WTC11 (cell line): ENCODE measurements at regions of chr9 and their contacts with region 1.

Region 1: DNA sequence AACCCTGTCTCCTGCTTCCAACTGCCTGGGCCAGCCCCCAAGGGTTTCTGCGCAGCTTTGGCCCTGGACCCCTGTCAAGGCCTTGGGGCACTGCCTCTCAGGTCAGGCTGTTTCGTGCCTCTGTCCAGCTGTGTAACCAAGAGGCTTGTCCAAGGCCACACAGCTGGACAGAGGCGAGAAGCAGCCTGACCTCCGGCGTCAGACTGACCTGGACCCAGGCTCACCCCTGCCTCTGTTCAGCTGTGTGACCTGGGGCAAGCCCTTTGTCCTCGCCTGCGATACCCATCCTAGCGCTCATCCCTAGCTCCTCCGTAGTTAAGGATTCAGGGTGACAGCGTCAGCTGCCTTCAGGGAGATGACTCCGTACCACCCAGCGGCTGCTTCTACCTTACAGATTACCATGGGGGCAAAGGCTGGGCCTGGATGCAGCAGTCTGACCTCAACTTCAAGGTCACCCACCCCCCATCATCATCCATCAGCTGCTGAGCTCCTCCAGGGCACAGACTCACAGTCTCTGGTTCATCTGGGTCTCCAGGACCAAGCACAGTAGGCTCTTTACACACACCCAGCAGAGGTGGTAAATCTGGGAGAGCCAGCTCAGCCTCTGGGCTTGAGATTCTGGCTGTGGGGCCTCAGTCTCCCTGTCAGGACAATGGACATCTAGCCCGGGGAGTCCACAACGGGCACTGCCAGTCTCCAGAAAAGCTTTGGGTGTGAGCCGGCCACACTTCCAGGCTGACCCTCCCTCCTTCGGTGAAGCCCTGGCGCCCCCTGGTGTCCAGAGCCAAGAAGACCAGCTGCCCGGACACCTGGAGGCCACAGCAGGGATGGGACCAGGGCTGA is 7.9 kb downstream of the AK1 start:
- DNase-seq: peak; percentile 96
- ATAC-seq: peak; percentile 89
- H3K4me3 Mint-ChIP-seq: no peak overlapping the region
- H3K27ac Mint-ChIP-seq: no peak overlapping the region; the same call in 1 of the 2 replicates
- H3K4me1 Mint-ChIP-seq: peaks cover 10% of the 10 kb centered on the region
- H3K27me3 Mint-ChIP-seq: no peaks in the 10 kb centered on the region
- CTCF ChIP-seq: peak; percentile 92

Region 2: DNA sequence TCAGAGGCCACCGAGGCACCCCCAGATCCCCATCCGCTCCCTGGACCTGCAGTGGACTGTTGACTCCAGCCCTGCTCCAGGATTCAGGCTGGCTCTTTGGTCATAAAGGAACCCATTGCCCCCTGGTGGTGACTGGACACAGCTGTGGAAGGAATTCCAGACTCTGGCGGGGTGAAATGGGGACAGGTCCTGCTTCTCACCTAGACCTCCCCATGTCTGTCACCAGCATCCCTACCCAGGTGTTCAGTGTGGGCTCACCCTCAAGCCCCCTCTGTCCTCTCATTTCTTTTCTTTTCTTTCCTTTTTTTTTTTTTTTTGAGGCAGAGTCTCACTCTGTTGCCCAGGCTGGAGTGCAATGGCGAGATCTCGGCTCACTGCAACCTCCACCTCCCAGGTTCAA is 283.0 kb before region 1 on chr9:
- CTCF ChIA-PET with region 1: interaction called, 12 read pairs
- POLR2A ChIA-PET with region 1: no interaction called
- DNase-seq: peak; percentile 86
- ATAC-seq: peak; percentile 92
- H3K4me3 Mint-ChIP-seq: no peak overlapping the region
- H3K27ac Mint-ChIP-seq: no peak overlapping the region
- H3K4me1 Mint-ChIP-seq: peaks cover 15% of the 10 kb centered on the region
- H3K27me3 Mint-ChIP-seq: no peaks in the 10 kb centered on the region
- CTCF ChIP-seq: peak; percentile 72

Region 3: DNA sequence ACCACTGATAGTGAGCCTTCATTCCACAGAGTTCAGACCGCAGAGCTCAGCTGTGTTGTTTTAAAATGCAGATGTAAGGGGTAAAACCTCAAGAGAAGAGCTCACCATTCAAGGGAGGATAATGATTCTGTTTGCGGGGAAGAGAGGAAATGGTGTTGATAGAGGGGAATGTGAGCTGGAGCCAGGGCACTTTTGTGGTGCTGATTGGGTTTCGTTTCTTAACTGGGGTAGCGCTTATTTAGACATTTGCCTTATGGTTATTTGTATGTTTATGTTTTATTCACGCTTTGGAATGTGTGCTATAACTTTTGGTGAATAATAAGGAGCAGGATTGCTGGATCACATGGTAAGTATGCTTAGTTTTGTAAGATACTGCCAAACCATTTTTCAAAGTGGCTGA is 214.9 kb before region 1 on chr9:
- CTCF ChIA-PET with region 1: no interaction called
- POLR2A ChIA-PET with region 1: no interaction called
- DNase-seq: no peak
- ATAC-seq: peak; percentile 79
- H3K4me3 Mint-ChIP-seq: peak overlapping the region; percentile 4
- H3K27ac Mint-ChIP-seq: peak overlapping the region; percentile 97
- H3K4me1 Mint-ChIP-seq: peaks cover 45% of the 10 kb centered on the region
- H3K27me3 Mint-ChIP-seq: no peaks in the 10 kb centered on the region
- CTCF ChIP-seq: no peak

Region 4: DNA sequence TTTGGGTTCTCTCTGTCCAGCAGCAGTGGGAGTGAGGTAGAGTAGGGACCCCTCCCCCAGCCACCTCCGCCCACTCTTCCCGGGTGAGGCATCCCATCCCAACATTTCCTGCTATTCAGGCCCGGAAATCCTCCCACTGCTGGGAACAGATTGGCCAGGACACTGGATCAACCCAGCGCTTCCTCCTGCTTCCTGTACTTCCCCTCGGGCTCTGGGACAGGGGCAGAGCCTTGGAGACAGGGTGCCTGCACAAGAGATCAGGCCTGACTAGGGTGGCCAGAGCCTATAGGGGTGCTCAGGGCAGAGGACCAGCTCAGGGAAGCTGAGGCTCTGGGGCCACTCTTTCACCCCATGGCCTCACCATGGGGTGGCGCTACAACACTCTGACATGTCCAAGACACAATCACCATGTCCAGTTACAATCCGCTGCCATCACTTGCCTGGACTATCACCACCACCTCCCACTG is 105.6 kb before region 1 on chr9:
- CTCF ChIA-PET with region 1: interaction called, 30 read pairs
- POLR2A ChIA-PET with region 1: no interaction called
- DNase-seq: peak; percentile 78
- ATAC-seq: peak; percentile 78
- H3K4me3 Mint-ChIP-seq: no peak overlapping the region
- H3K27ac Mint-ChIP-seq: peak overlapping the region; percentile 8; the same call in 1 of the 2 replicates
- H3K4me1 Mint-ChIP-seq: peaks cover 44% of the 10 kb centered on the region
- H3K27me3 Mint-ChIP-seq: peaks cover 4% of the 10 kb centered on the region; the same call in 1 of the 2 replicates
- CTCF ChIP-seq: 0 out of 2 replicates have a peak, but pooled peaks have one; percentile 37

Region 5: DNA sequence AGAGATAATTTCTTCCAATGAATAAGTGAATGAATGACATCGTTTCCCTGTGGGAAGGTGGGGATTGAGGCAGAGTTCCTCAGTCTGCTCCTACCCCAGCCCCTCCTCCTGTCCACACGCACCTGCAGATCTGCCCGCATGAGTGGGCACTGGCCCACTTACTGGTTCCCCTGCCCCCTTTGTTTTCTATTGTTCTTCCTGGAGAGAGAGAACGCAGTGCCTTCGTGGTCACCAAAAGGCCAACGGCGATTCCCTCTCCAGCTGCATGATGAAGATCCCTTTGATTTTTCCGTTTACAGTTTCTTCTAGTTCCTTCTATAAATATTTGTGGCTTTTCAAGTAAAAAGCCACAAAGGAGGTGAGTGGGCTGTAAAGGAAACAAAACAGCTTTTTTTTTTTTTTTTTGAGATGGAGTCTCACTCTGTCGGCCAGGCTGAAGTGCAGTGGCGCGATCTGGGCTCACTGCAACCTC is 72.6 kb before region 1 on chr9:
- CTCF ChIA-PET with region 1: interaction called, 17 read pairs
- POLR2A ChIA-PET with region 1: interaction called, 9 read pairs
- DNase-seq: no peak
- ATAC-seq: no peak
- H3K4me3 Mint-ChIP-seq: no peak overlapping the region
- H3K27ac Mint-ChIP-seq: no peak overlapping the region
- H3K4me1 Mint-ChIP-seq: peaks cover 8% of the 10 kb centered on the region
- H3K27me3 Mint-ChIP-seq: no peaks in the 10 kb centered on the region
- CTCF ChIP-seq: no peak

Region 6: DNA sequence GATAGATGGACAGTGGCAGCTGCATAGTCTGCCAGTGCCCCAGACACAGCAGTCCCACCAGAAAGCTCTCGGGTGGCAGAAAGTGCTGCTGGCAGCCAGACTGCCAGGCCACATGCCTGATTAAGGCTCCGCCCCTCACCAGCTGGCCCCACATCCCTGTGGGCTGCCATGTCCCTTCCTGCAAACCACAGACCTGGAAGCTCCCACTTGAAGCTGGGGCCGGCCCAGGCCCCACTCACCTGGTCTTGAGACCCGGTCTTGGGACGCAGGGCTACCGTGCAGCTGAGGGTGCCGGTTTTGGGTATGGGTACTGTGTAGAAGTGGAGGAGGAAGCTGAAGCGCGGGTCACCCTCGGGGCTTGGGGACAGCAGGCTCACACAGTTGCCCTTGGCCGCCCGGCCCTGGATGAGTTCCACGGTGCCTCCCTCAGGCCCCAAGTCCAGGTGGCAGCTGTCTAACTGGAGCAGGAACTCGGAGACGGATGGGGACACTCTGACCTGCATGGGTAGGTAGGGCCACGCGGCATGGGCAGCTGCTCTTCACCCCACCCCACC is 51.6 kb before region 1 on chr9:
- CTCF ChIA-PET with region 1: interaction called, 115 read pairs
- POLR2A ChIA-PET with region 1: no interaction called
- DNase-seq: no peak
- ATAC-seq: no peak
- H3K4me3 Mint-ChIP-seq: no peak overlapping the region
- H3K27ac Mint-ChIP-seq: 0 out of 2 replicates have a peak overlapping the region, but pooled peaks have one; percentile 11
- H3K4me1 Mint-ChIP-seq: no peaks in the 10 kb centered on the region
- H3K27me3 Mint-ChIP-seq: no peaks in the 10 kb centered on the region
- CTCF ChIP-seq: no peak

Region 7: GRCh38 chr9:127884427-127884911 is 14.9 kb after region 1 on chr9:
- CTCF ChIA-PET with region 1: interaction called, 32 read pairs
- POLR2A ChIA-PET with region 1: interaction called, 4 read pairs
- DNase-seq: no peak
- ATAC-seq: no peak; the same call in 1 of the 2 replicates
- H3K4me3 Mint-ChIP-seq: no peak overlapping the region
- H3K27ac Mint-ChIP-seq: peak overlapping the region; percentile 65; the same call in 1 of the 2 replicates
- H3K4me1 Mint-ChIP-seq: peaks cover 16% of the 10 kb centered on the region
- H3K27me3 Mint-ChIP-seq: no peaks in the 10 kb centered on the region
- CTCF ChIP-seq: no peak

Region 8: DNA sequence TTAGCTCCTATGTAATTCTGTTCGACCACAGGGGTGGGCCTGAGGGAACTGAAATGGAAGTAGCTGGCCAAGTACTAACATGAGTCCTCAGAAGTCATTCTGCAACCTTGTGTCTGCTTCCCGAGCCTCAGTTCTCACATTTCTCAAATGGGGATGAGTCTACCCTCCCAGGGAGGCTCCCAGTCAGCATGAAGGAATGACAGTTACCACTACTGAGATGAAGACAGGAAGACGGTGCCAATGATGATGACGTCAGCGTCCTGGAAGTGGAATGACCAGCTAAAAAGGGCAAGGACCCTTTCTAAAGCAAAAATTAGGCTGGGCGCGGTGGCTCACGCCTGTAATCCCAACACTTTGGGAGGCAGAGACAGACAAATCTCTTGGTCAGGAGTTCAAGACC is 54.2 kb after region 1 on chr9:
- CTCF ChIA-PET with region 1: interaction called, 28 read pairs
- POLR2A ChIA-PET with region 1: no interaction called
- DNase-seq: no peak
- ATAC-seq: no peak
- H3K4me3 Mint-ChIP-seq: no peak overlapping the region
- H3K27ac Mint-ChIP-seq: no peak overlapping the region
- H3K4me1 Mint-ChIP-seq: peaks cover 7% of the 10 kb centered on the region
- H3K27me3 Mint-ChIP-seq: peaks cover 24% of the 10 kb centered on the region
- CTCF ChIP-seq: no peak